PC-3 (cell line): ENCODE measurements at regions of chr4 and their contacts with region 1.

Region 1: DNA sequence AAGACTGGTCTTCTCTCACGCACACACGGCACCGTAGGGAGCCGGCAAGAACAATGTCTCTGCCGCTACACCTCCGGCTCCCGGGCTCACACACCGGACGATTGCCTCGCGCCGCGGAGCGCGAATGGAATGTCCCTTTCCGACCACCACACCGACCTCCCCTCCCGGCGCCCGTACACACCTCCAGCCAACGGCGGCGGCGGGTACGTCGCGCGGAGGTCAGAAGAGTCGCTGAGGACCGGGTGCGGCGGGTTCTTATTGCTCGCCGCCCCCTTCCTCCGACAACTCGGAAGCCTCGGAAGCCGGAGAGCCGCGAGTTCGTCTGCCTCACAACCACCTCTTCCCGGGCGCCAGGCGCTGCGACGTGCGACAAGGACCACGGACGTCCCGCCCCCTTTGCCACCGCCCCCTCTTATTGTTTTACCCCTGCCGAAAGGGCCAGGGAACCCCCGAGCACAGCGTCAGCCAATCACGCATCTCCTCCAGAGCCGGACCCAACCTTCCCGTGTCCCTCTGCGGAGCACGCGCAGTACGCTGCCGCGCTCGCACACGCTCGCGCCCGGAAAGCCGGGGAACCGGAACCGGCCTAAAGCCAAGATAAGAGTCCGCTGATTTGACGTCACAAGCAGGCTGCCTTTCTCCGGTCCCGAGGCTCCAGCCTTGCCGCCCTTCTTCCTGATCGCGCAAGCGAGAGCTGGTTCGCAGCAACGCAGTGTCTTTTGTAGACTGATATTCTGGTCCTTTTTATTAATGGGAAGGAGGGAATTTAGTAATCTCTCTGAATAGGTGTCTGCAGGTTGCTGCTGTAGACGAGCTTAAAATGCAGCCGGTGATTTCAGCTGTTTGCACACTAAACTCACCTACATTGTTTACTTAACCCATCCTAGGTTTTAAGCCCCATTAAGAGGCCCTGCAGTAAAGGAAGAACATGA is at the start of gene G3BP2:
- DNase-seq: peak; percentile 96
- ATAC-seq: peak; percentile 94
- H3K4me3 ChIP-seq: peak within 1 kb of the TSS; percentile 100
- H3K27ac ChIP-seq: peak within 1 kb of the TSS; percentile 80
- H3K4me1 ChIP-seq: peaks cover 20% of the 10 kb centered on the region
- H3K27me3 ChIP-seq: no peaks in the 10 kb centered on the region
- CTCF ChIP-seq: no peak
- total RNA-seq, gene G3BP2: 63.2 and 68.7 TPM in 2 replicates

Region 2: DNA sequence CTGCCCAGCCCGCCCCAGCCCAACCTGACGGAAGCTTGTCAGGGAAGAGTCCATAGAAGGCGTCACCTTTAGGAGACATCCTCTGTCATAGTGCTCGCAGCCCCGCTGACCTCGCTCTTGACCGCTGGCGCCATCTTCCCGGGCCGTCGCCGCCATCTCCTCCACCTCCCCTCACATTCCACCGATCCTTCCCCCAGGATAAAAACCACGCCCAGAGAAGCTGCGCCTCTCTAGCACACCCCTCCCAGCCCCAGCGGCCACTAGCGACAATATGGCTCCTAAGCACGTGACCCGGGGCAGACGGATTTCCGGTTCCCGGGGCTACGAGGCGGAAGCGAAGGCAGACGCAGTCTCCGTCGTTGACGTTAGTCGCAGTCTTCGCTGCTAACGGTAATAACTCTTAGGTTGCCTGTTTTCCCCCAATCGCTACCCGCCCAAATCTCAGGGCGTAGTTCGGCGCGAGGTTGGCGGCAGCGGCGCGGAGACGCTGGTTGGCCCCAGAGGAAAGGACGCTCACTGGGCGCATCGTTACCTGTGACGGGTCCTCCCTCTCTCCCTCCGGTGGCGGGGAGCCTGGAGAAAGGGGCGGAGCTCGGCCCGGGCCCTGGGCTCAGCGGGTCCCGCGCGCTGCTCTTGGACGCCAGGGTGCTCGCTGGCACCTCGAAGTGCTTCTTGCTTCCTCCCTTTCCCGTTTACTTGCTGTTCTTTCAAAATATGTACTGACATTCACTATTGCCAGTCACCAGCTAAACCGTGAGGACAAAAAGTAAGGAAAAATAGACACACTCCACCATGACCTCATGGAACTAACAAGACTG is 159.0 kb before region 1 on chr4 and contains the starts of genes RCHY1 and THAP6:
- CTCF ChIA-PET with region 1: no interaction called
- POLR2A ChIA-PET with region 1: no interaction called
- intact Hi-C with region 1: loop called (anchors 1 kb)
- DNase-seq: peak; percentile 94
- ATAC-seq: peak; percentile 91
- H3K4me3 ChIP-seq: peak within 1 kb of the TSS; percentile 95
- H3K27ac ChIP-seq: peak within 1 kb of the TSS; percentile 87
- H3K4me1 ChIP-seq: peaks cover 38% of the 10 kb centered on the region
- H3K27me3 ChIP-seq: no peaks in the 10 kb centered on the region
- CTCF ChIP-seq: no peak
- total RNA-seq, gene RCHY1: 14.3 and 18.2 TPM in 2 replicates
- total RNA-seq, gene THAP6: 5.2 and 8.7 TPM in 2 replicates

Region 3: DNA sequence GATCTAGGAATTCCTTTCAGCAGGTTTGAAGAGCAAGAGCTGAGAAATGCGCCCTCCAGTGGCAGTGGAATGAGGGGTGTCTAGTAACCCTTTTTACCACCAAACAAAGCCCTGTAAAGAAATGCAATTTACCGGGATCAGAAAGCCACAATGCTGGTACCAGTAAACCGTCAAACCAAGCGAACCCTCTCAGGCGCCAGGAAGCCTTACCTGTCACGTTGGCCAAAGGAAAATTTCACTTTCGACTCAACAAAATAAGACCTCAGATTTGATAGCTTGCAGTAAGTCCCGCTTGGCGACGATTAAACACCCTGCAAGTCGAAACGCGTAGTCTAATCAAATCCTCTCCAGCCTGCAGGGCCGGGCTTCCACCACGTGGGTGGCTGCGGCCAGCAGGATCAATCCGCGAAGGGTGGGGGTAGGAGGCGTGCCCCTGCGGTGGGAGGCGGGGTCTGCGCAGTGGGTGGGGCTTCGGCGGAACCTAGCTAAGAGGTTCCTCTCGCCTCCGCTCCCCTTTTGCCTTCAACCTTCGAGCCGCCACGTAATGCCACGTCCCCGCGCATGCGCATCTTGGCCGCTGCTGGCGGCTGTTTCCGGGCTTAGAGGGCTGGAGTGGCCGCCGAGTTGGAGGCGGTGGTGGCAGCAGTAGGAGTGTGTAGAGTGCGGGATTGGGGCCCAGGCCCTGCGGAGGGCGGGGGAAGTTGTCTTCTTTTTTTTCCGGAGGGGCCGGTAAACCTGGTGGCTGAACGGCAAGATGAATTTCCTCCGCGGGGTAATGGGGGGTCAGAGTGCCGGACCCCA is 51.0 kb after region 1 on chr4 and contains the start of gene USO1:
- CTCF ChIA-PET with region 1: interaction called, 8 read pairs
- POLR2A ChIA-PET with region 1: interaction called, 15 read pairs
- intact Hi-C with region 1: loop called (anchors 1 kb)
- DNase-seq: peak; percentile 95
- ATAC-seq: peak; percentile 83
- H3K4me3 ChIP-seq: peak within 1 kb of the TSS; percentile 94
- H3K27ac ChIP-seq: peak within 1 kb of the TSS; percentile 82
- H3K4me1 ChIP-seq: peaks cover 27% of the 10 kb centered on the region
- H3K27me3 ChIP-seq: no peaks in the 10 kb centered on the region
- CTCF ChIP-seq: peak; percentile 77
- total RNA-seq, gene USO1: 29.9 and 34.3 TPM in 2 replicates